Common myeloid progenitor, CD34-positive (primary cell): ENCODE measurements at regions of chrX and their contacts with region 1.

Region 1: GRCh38 chrX:107894038-107894437 is 68.4 kb downstream of the MID2 start:
- DNase-seq: peak; percentile 37 to 71 (median 63)
- H3K4me3 ChIP-seq: no peak overlapping the region
- H3K27ac ChIP-seq: no peak overlapping the region
- H3K4me1 ChIP-seq: no peaks in the 10 kb centered on the region
- H3K27me3 ChIP-seq: no peaks in the 10 kb centered on the region

Region 2: DNA sequence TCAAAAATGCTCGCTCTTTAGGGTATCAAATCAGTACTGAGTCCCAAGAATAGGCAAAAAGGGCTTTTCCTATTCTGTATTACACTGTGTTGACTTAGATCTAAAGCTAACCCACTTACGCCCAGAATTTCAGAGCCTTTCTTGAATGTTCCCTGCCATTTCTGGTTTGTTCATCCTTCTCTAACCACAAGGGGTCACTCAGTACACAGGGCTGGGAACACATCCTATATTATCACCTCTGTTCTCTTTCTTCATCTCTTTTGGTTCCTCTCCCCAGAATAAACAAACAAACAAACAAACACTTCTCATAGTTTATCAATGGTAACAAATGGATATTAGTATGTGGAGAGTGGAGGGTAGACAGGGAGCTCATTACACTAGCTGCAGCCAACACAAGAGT is 868.5 kb before region 1 on chrX:
- CTCF ChIA-PET with region 1: interaction called, 12 read pairs
- POLR2A ChIA-PET with region 1: interaction called, 4 read pairs
- DNase-seq: peak; percentile 14 to 48 (median 43)
- H3K4me3 ChIP-seq: no peak overlapping the region
- H3K27ac ChIP-seq: no peak overlapping the region
- H3K4me1 ChIP-seq: no peaks in the 10 kb centered on the region
- H3K27me3 ChIP-seq: peaks cover 0 to 5% (median 0%) of the 10 kb centered on the region in 5 experiments